Activated CD4-positive, alpha-beta memory T cell treated with anti-CD3 and anti-CD28 coated beads, Interleukin-2, amount 10 ng/mL, durations not matched to agents 7 days and 5 days (primary cell): ENCODE measurements at regions of chr12 and their contacts with region 1.

Region 1: DNA sequence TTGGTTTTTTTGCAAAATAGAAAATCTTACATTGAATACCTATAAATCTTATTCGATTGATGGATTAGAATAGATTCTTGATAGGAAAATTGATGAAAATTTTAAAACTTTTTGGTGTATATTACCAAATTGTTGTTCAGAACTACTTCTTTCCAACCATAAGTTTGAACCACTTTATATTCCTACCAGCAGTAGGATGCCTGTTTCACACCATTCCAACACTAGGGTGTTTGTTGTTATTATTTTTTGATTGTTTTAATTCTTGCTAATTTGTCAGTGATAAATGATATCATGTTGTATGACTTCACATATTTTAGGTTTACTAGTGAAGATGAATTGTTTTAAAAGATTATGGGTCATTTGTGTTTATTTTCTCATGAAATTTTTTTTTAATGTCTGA is 43.4 kb downstream of the UTP20 start:
- DNase-seq: no peak
- H3K4me3 Mint-ChIP-seq: no peak overlapping the region
- H3K27ac Mint-ChIP-seq: no peak overlapping the region
- H3K4me1 Mint-ChIP-seq: no peaks in the 10 kb centered on the region
- H3K27me3 Mint-ChIP-seq: no peaks in the 10 kb centered on the region

Region 2: DNA sequence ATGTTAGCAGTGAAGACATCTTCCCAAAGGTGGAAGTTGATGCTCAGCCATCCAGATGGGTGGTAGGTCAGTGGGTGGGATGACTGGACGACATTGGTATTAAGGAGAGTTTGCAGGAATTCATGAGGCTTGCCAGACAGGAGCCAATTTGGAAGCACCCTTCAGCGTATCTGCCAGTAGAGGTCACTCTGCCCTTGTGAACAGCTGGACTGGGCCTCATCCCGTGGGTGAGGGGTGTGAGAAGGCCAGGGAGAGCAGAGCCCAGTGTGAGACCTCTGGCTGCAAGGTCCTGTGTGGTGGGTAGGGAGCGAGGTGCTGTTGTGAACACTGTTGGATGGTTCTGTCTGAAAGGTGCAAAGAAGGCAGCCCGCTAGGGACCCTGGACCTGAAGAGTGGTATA is 150.9 kb before region 1 on chr12:
- CTCF ChIA-PET with region 1: no interaction called
- POLR2A ChIA-PET with region 1: no interaction called
- DNase-seq: no peak
- H3K4me3 Mint-ChIP-seq: no peak overlapping the region
- H3K27ac Mint-ChIP-seq: no peak overlapping the region
- H3K4me1 Mint-ChIP-seq: no peaks in the 10 kb centered on the region
- H3K27me3 Mint-ChIP-seq: peaks cover 3% of the 10 kb centered on the region

Region 3: GRCh38 chr12:101280006-101280505 is 43.2 kb before region 1 on chr12 and contains the start of gene UTP20:
- CTCF ChIA-PET with region 1: interaction called, 11 read pairs
- POLR2A ChIA-PET with region 1: no interaction called
- DNase-seq: peak; percentile 95
- H3K4me3 Mint-ChIP-seq: peak within 1 kb of the TSS; percentile 91
- H3K27ac Mint-ChIP-seq: peak within 1 kb of the TSS; percentile 50
- H3K4me1 Mint-ChIP-seq: peaks cover 22% of the 10 kb centered on the region
- H3K27me3 Mint-ChIP-seq: peaks cover 23% of the 10 kb centered on the region
- total RNA-seq, gene UTP20: 7.6 to 9.1 TPM

Region 4: GRCh38 chr12:101336437-101336836 is 13.2 kb after region 1 on chr12:
- CTCF ChIA-PET with region 1: interaction called, 16 read pairs
- POLR2A ChIA-PET with region 1: no interaction called
- DNase-seq: no peak
- H3K4me3 Mint-ChIP-seq: no peak overlapping the region
- H3K27ac Mint-ChIP-seq: no peak overlapping the region
- H3K4me1 Mint-ChIP-seq: no peaks in the 10 kb centered on the region
- H3K27me3 Mint-ChIP-seq: no peaks in the 10 kb centered on the region